ENCODE measurements at regions of chr17 and their contacts with region 1.

Region 1: GRCh38 chr17:73192894-73193701 is at the start of gene COG1:
- DNase-seq: peak; percentile 55
- H3K4me3 Mint-ChIP-seq: peak within 1 kb of the TSS; percentile 96
- H3K27ac Mint-ChIP-seq: peak within 1 kb of the TSS; percentile 96
- H3K4me1 Mint-ChIP-seq: peaks cover 19% of the 10 kb centered on the region
- H3K27me3 Mint-ChIP-seq: no peaks in the 10 kb centered on the region
- total RNA-seq, gene COG1: 34.3 and 37.1 TPM in 2 replicates

Region 2: DNA sequence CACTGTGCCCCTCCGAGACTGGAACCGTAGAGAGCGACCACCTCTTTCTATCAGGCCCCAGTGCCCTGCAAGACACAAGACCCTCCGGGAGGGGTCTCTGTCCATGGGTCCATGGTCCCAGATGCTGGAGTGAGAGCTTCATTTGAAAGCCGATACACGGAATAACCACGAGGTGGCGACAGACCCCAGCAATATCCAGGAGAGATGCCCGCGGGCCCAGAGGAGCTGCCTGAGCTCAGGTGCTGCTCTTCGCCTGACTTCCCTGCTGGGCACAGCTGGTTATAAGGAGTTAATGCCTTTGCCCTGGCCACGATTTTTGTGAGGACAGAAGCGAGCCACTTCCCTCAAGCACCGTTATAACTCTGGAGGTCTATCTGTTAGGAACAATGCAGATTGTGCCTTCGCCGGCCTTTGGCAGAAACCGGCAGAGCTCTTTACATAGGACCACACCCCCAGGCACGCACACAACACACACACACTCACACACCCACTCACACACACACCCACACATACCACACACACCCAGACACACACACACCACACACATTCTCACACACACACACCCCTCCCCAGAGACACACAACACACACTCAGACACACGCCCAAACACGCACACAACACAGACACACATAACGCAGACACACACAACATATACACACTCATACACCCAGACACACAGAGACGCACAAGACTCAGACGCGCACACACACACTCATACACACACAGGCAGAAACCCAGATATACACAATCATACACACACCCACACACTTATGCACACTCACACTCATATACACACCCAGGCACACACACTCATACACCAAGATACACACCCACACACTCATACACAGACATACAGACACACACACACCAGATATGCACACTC is 635.9 kb before region 1 on chr17:
- intact Hi-C with region 1: loop called (anchors 2 kb)
- DNase-seq: peak; percentile 38
- H3K4me3 Mint-ChIP-seq: no peak overlapping the region
- H3K27ac Mint-ChIP-seq: no peak overlapping the region
- H3K4me1 Mint-ChIP-seq: no peaks in the 10 kb centered on the region
- H3K27me3 Mint-ChIP-seq: no peaks in the 10 kb centered on the region

Region 3: DNA sequence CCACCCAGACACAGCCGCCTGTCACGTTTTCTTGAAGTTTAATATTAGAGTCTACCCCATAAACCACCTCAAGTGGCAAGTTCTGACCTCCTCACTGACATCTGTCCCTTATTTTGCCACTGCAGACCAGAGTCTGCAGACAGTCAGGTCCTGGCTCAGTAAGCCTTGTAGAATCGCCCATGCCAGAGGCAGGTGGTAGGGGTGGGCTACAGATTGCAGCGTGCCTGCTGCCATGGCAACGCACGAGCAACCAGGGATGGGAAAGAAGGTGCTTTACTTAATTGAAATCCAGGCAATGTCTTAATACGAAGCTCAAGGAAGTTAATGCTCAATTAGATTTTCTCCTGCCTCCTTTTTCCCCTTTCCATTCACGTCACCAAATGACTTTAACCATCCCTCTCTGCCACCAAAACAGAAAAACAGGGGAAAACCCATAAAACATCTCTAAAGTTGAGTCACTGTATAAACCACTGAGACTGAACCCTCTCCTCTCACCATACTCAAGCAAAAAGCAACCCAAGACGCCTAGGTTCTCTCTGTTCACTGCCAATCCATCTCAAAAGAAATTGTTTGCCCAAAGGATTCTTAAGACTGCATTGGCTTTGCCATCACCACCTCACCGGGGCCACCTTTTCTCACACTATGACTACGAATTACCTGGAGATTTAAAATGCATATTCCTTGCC is 329.4 kb before region 1 on chr17:
- intact Hi-C with region 1: loop called (anchors 10 kb)
- DNase-seq: no peak
- H3K4me3 Mint-ChIP-seq: no peak overlapping the region
- H3K27ac Mint-ChIP-seq: peak overlapping the region; percentile 69
- H3K4me1 Mint-ChIP-seq: peaks cover 46% of the 10 kb centered on the region
- H3K27me3 Mint-ChIP-seq: no peaks in the 10 kb centered on the region

Region 4: GRCh38 chr17:73210002-73210678 is 17.0 kb after region 1 on chr17:
- intact Hi-C with region 1: loop called (anchors 2 kb)
- DNase-seq: no peak
- H3K4me3 Mint-ChIP-seq: no peak overlapping the region
- H3K27ac Mint-ChIP-seq: peak overlapping the region; percentile 67
- H3K4me1 Mint-ChIP-seq: peaks cover 33% of the 10 kb centered on the region
- H3K27me3 Mint-ChIP-seq: no peaks in the 10 kb centered on the region

Region 5: DNA sequence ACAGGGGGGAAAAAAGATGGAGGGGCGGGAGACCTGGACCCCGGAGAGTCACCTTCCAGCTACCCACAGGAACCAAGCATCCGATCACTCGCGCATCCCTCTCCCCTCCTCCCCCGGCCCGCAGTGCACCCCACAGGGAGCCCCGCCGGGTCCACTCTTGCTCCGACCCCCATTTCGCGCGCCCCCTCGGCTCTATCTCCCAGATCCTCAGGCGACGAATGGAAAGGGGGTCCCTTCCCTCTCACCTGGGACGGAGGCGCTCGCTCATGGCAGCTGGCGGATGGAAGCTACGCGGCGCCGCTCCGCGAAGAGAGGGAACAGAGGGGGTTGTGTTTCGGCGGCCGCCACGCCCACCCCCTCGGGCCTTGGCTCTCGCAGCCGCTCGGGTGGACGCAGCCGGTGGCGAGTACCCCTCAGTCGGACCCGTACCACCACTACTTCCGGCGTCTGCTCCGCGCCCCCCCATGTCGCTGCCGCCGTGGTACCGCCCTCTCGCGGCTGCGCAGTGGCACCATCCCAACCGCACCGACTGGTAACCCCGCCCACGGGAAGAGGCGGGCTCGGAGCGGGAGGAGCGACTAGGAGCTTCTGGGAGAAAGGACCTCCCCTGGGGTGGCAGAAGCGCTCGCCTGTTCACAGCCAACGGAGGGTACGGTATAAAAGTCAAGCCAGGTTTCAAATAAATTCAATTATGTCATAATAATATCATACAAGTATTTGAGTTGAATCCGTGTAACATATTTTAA is 38.9 kb after region 1 on chr17:
- intact Hi-C with region 1: loop called (anchors 1 kb)
- DNase-seq: peak; percentile 97
- H3K4me3 Mint-ChIP-seq: peak overlapping the region; percentile 97
- H3K27ac Mint-ChIP-seq: peak overlapping the region; percentile 95
- H3K4me1 Mint-ChIP-seq: peaks cover 57% of the 10 kb centered on the region
- H3K27me3 Mint-ChIP-seq: no peaks in the 10 kb centered on the region

Region 6: GRCh38 chr17:73311781-73312641 is 118.9 kb after region 1 on chr17 and contains the start of gene CDC42EP4:
- intact Hi-C with region 1: loop called (anchors 1 kb)
- DNase-seq: peak; percentile 84
- H3K4me3 Mint-ChIP-seq: peak within 1 kb of the TSS; percentile 85
- H3K27ac Mint-ChIP-seq: no peak within 1 kb of the TSS
- H3K4me1 Mint-ChIP-seq: peaks cover 7% of the 10 kb centered on the region
- H3K27me3 Mint-ChIP-seq: peaks cover 18% of the 10 kb centered on the region
- total RNA-seq, gene CDC42EP4: 0.78 and 1.1 TPM in 2 replicates